PC-9 (cell line): ENCODE measurements at regions of chr12 and their contacts with region 1.

Region 1: GRCh38 chr12:6376079-6376869 is 911 bp upstream of the SCNN1A start:
- DNase-seq: peak; percentile 87 to 97
- H3K4me3 ChIP-seq: peak overlapping the region; percentile 62
- H3K27ac ChIP-seq: peak overlapping the region; percentile 89
- H3K4me1 ChIP-seq: peaks cover 41% of the 10 kb centered on the region
- H3K27me3 ChIP-seq: no peaks in the 10 kb centered on the region
- CTCF ChIP-seq: peak; percentile 53; the same call in 1 of the 2 replicates

Region 2: DNA sequence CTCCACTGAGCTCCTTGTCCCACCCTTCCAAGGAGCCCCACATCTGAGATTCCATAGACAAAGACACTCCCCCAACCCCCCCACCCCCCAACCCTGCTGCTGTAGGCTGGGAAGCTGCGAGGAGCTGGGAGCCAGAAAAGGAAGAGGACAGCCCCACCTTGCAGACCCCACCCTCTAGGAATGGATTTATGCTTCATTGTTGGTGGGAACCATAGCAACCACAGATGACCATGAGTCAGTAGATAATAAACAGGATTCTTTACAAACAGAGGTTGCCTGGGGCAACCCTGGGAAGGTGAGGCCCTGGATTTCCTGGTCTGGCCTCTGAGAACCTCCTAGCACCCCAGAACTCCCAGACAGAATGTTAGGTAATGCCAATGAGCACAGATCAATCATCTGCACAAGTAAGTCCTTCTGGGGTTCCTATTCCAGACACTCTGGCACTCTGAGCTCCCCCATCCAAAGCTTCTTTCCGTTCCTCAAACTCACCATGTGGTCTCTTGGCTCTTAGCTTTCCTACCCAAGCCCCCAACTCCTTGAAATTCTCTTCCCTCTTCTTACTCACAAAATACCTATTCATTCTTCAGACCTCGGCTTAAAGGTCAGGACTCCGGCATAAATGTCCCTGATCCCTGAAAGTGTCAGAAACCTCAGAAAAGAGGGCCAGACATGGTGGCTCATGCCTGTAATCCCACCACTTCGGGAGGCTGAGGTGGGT is 81.0 kb before region 1 on chr12:
- CTCF ChIA-PET with region 1: interaction called, 4 read pairs
- POLR2A ChIA-PET with region 1: interaction called, 52 read pairs
- intact Hi-C with region 1: loop called (anchors 2 kb)
- DNase-seq: peak; percentile 95 to 99
- H3K4me3 ChIP-seq: no peak overlapping the region; the same call in 1 of the 2 replicates
- H3K27ac ChIP-seq: peak overlapping the region; percentile 91
- H3K4me1 ChIP-seq: peaks cover 64% of the 10 kb centered on the region
- H3K27me3 ChIP-seq: no peaks in the 10 kb centered on the region
- CTCF ChIP-seq: no peak

Region 3: GRCh38 chr12:6345319-6346091 is 30.8 kb before region 1 on chr12:
- CTCF ChIA-PET with region 1: no interaction called
- POLR2A ChIA-PET with region 1: interaction called, 18 read pairs
- intact Hi-C with region 1: no loop called
- DNase-seq: peak; percentile 76 to 87
- H3K4me3 ChIP-seq: no peak overlapping the region
- H3K27ac ChIP-seq: peak overlapping the region; percentile 48
- H3K4me1 ChIP-seq: peaks cover 43% of the 10 kb centered on the region
- H3K27me3 ChIP-seq: no peaks in the 10 kb centered on the region
- CTCF ChIP-seq: no peak

Region 4: GRCh38 chr12:6423267-6424007 is 47.2 kb after region 1 on chr12:
- CTCF ChIA-PET with region 1: no interaction called
- POLR2A ChIA-PET with region 1: no interaction called
- intact Hi-C with region 1: loop called (anchors 2 kb)
- DNase-seq: peak; percentile 81 to 82
- H3K4me3 ChIP-seq: no peak overlapping the region
- H3K27ac ChIP-seq: no peak overlapping the region
- H3K4me1 ChIP-seq: 0 out of 2 replicates have a peak, but pooled peaks cover 3% of the 10 kb centered on the region
- H3K27me3 ChIP-seq: no peaks in the 10 kb centered on the region
- CTCF ChIP-seq: peak; percentile 95

Region 5: GRCh38 chr12:6470375-6471163 is 94.3 kb after region 1 on chr12 and contains the start of gene VAMP1:
- CTCF ChIA-PET with region 1: no interaction called
- POLR2A ChIA-PET with region 1: interaction called, 4 read pairs
- intact Hi-C with region 1: loop called (anchors 1 kb)
- DNase-seq: peak; percentile 93 to 98
- H3K4me3 ChIP-seq: peak within 1 kb of the TSS; percentile 76
- H3K27ac ChIP-seq: no peak within 1 kb of the TSS
- H3K4me1 ChIP-seq: peaks cover 15% of the 10 kb centered on the region
- H3K27me3 ChIP-seq: 0 out of 2 replicates have a peak, but pooled peaks cover 6% of the 10 kb centered on the region
- CTCF ChIP-seq: no peak
- total RNA-seq, gene VAMP1: 7.7 and 9.1 TPM in 2 replicates

Region 6: GRCh38 chr12:6592087-6592486 is 215.8 kb after region 1 on chr12:
- CTCF ChIA-PET with region 1: no interaction called
- POLR2A ChIA-PET with region 1: no interaction called
- intact Hi-C with region 1: no loop called
- DNase-seq: peak in 1 of 2 experiments; percentile 4
- H3K4me3 ChIP-seq: no peak overlapping the region
- H3K27ac ChIP-seq: no peak overlapping the region
- H3K4me1 ChIP-seq: no peaks in the 10 kb centered on the region
- H3K27me3 ChIP-seq: no peaks in the 10 kb centered on the region
- CTCF ChIP-seq: no peak